RWPE1 (cell line): ENCODE measurements at regions of chr19 and their contacts with region 1.

Region 1: DNA sequence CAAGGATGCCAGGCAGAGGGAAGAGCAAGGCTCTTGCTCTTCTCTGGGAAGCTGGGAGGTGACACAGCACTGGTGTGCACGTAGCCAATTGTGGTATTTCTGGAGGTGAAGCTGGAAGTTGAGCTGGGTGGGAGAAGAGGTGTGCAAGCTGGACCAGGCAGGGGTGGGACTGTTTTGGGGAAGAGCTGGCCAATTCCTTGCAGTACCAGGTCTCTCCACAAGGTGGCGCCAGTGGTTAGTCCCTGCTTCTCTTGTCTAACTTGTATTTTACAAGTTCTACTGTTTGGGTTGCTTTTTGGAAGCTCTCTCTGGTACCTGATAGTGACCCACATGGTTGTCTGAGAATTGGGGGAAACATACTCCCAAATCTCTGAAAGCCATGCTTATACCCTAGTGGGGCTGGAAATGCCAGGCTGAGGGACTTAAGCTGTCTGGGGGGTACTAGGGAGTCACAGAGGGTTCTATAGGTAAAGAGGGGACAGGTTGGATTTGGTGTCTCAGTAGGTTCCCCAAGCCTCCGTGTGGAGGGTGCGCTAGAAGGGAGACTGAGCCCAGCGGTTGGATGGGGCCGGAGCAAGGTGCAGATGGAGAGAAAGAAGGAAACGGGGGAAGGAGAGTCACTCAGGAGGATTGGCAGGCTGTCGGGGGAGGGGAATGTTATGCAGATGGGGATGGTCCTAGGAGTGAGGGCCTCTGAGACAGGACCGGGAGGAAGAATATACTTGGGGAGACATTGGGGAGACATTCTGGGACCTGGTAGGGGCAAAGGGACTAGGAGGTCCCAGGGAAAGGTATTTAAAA is 3.0 kb downstream of the HPN start:
- DNase-seq: peak; percentile 65
- H3K27ac ChIP-seq: no peak overlapping the region
- CTCF ChIP-seq: peak; percentile 91

Region 2: GRCh38 chr19:33785795-33786194 is 1258.7 kb before region 1 on chr19:
- CTCF ChIA-PET with region 1: no interaction called
- POLR2A ChIA-PET with region 1: no interaction called
- DNase-seq: no peak
- H3K27ac ChIP-seq: no peak overlapping the region
- CTCF ChIP-seq: no peak

Region 3: DNA sequence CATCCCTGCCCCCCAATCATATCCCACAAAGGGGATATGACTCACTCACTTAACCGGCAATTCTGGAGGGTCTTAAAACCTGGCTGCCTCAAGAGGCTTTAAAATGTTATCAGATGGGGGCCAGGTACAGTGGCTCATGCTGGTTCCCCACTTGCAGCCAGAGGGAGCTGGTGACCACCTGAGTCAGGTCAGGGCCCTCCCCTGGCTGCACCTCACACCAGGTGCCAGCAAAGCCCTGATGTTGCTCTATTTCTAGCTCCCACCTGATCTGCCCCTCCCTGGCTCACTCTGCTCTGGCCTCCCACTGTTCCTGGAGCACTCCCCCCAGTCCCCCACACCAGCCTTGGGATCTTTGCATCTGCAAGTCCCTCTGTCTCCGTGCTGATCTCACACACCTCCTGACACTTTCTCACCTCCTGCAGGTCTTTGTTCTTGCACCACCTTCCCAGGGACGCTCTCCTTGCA is 11.2 kb after region 1 on chr19:
- CTCF ChIA-PET with region 1: interaction called, 12 read pairs
- POLR2A ChIA-PET with region 1: no interaction called
- DNase-seq: peak; percentile 24
- H3K27ac ChIP-seq: no peak overlapping the region
- CTCF ChIP-seq: peak; percentile 42

Region 4: DNA sequence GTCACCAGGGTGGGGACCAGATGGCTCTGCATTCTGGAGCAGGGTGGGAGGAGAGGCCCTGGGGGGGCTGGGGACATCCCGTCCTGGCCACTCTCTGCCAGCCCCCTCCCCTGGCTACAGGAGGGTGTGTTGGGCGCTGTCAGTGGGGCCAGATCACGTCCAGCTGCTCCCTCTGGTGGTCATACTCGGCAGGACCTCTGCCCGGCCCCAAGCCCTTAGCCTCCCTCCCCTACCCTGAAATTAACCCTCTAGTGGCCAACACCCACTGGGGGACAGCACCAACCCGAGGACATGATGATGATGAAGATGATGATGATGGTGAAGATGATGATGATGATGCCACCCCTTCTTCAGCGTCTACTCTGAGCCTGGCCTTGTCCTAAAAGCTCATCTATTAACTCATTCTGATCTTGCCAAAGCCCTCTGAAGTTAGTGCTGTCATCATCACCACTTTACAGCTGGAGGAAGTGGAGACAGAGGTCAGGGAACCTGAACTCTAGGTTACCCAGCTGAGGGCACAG is 90.9 kb after region 1 on chr19:
- CTCF ChIA-PET with region 1: interaction called, 11 read pairs
- POLR2A ChIA-PET with region 1: no interaction called
- DNase-seq: peak; percentile 77
- H3K27ac ChIP-seq: 0 out of 2 replicates have a peak overlapping the region, but pooled peaks have one; percentile 17
- CTCF ChIP-seq: peak; percentile 88

Region 5: GRCh38 chr19:35140962-35141637 is 96.6 kb after region 1 on chr19:
- CTCF ChIA-PET with region 1: interaction called, 15 read pairs
- POLR2A ChIA-PET with region 1: no interaction called
- DNase-seq: peak; percentile 99
- H3K27ac ChIP-seq: no peak overlapping the region; the same call in 1 of the 2 replicates
- CTCF ChIP-seq: peak; percentile 82

Region 6: GRCh38 chr19:35204799-35205732 is 160.5 kb after region 1 on chr19:
- CTCF ChIA-PET with region 1: no interaction called
- POLR2A ChIA-PET with region 1: no interaction called
- DNase-seq: no peak
- H3K27ac ChIP-seq: no peak overlapping the region
- CTCF ChIP-seq: no peak